Caco-2 (cell line): ENCODE measurements at regions of chr1 and their contacts with region 1.

Region 1: DNA sequence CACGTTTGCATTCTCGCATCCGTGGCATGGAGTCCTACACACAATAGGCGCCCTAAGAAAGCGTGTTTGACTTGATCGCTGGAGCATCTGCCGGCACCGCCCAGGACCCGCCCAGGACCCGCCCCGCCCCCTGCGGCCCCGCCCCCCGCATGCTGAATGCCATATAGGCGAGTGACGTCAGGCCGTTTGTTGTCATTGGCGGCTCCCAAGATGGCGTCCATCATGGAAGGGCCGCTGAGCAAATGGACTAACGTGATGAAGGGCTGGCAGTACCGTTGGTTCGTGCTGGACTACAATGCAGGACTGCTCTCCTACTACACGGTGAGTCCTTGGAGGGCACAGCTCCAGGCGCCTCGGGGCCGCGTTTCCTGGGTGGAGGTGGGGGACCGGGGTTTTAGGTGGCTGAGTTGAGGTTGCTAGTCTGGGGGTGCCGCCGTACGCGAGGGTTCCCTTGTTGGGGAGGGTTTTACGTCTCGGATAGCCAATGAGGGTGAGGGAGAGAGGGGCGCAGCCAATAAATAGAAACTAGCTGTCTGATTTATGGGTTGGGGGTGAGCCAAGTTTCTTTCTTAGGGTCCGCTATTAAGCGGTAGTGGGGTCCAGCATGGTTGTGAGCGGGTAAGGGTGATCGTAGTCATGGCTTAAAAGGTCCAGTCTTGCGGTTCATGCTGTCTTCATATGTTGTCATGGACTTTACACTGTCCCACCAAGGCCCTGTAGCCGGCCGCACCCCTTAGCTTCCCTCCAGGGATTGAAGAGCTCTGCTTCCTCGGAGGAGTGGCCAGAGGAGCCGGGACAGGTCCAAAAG is at the start of gene OSBPL9:
- DNase-seq: peak; percentile 78 to 86
- H3K4me3 ChIP-seq: peak within 1 kb of the TSS; percentile 94
- H3K4me3 Mint-ChIP-seq: peak within 1 kb of the TSS; percentile 93
- H3K27ac Mint-ChIP-seq: peak within 1 kb of the TSS; percentile 92
- H3K4me1 ChIP-seq: peaks cover 13% of the 10 kb centered on the region
- H3K4me1 Mint-ChIP-seq: peaks cover 22% of the 10 kb centered on the region
- H3K27me3 ChIP-seq: no peaks in the 10 kb centered on the region
- H3K27me3 Mint-ChIP-seq: no peaks in the 10 kb centered on the region
- CTCF ChIP-seq: no peak
- total RNA-seq, gene OSBPL9: 58.7 and 61.9 TPM in 2 replicates

Region 2: DNA sequence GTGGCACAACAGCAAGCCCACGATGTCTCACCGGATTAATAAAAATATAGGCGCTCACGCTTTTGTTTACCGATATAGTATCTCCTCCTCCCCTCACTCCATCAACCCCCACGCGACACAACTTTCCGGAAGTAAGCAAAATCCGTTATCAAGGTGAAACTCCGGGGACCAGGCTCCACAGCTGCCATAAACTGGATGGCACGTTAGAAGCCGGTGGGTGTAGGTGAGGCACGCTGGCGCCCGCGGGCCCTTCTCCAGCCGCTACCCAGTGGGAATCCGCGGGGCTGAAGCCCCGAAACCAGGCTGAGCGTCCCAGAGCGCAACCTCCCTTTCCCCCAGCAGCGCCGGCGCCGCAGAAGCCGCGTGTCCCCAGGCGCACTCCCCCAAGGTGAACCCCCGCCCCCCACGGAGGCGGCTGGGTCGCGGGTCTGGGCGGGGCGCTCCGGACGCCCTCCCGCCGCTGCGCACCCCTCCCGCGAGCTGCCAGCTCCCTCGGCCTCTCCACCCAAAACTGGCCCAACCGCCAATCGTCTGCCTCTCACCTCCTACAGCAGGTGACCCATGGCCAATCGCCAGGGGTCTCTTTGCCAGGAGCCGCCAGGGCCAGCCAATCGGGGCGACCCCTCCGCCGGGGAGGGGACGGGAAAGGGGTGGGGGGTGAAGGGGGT is 112.2 kb after region 1 on chr1:
- CTCF ChIA-PET with region 1: no interaction called
- POLR2A ChIA-PET with region 1: no interaction called
- intact Hi-C with region 1: loop called (anchors 5 kb)
- DNase-seq: peak; percentile 95 to 97
- H3K4me3 ChIP-seq: peak overlapping the region; percentile 85
- H3K4me3 Mint-ChIP-seq: peak overlapping the region; percentile 73
- H3K27ac Mint-ChIP-seq: peak overlapping the region; percentile 39
- H3K4me1 ChIP-seq: peaks cover 20% of the 10 kb centered on the region
- H3K4me1 Mint-ChIP-seq: peaks cover 24% of the 10 kb centered on the region
- H3K27me3 ChIP-seq: no peaks in the 10 kb centered on the region
- H3K27me3 Mint-ChIP-seq: no peaks in the 10 kb centered on the region
- CTCF ChIP-seq: no peak